PC-3 (cell line): ENCODE measurements at regions of chr9 and their contacts with region 1.

Region 1: DNA sequence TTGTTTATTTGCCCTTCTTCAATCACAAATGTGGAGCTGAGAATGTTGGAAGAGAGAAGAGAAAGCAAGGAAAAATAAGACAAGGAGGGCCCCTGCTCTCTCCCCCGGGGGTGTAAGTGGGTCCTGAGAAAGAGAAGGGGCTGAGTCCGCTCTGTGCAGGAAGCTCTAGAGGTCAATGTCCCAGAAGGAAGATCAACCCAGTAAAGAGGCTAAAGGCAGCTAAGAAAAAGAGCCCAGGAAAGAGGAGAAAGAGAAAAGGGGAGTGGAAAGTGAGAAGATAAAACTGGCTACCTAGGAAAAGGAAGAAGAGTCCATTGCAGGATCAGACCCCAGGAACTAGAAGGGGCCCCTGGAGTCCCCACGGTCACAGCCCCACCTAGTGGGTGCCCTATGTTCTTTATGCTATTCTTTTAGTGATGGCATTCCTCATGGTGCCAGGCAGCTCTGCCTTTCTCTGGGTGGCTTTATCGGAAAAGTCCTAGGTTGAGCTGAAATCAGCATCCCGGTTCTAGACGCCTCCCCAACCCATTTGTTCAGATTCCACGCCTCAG is 583.4 kb downstream of the ACTL7B start:
- DNase-seq: peak; percentile 54
- ATAC-seq: peak; percentile 80
- H3K4me3 ChIP-seq: peak overlapping the region; percentile 65
- H3K27ac ChIP-seq: peak overlapping the region; percentile 81
- H3K4me1 ChIP-seq: peaks cover 35% of the 10 kb centered on the region
- H3K27me3 ChIP-seq: no peaks in the 10 kb centered on the region
- CTCF ChIP-seq: peak; percentile 65

Region 2: DNA sequence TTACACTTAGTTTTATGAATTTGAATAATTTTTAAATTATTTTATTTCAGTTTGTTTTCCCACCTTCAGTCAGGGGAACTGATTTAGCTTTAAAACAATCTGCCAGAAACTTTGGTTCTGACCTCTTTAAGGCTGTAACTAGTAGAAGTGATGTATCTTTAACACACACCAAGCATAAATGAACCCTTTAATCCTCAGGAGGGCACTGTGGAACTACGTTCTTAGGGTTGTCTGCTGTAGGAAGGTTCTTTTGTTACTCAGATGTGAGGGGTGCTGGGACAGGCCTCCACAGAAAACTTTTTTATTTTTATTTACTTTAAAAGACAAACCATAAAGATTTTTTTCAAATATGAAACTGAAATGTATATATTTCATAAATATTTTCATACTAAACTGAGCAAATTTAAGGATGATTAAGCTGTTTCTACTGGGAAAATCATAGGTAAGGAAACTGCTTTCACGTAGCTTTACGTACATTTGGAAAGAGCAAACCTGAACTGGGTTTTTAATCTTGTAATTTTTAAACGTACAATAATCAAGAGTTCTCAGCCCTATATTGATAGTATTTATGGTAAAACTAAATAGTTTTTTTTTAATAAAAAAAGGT is 788.2 kb before region 1 on chr9:
- CTCF ChIA-PET with region 1: no interaction called
- POLR2A ChIA-PET with region 1: no interaction called
- intact Hi-C with region 1: loop called (anchors 1 kb)
- DNase-seq: peak; percentile 74
- ATAC-seq: peak; percentile 40
- H3K4me3 ChIP-seq: no peak overlapping the region
- H3K27ac ChIP-seq: no peak overlapping the region
- H3K4me1 ChIP-seq: peaks cover 27% of the 10 kb centered on the region
- H3K27me3 ChIP-seq: no peaks in the 10 kb centered on the region
- CTCF ChIP-seq: peak; percentile 66

Region 3: GRCh38 chr9:107794259-107794658 is 478.2 kb before region 1 on chr9:
- CTCF ChIA-PET with region 1: no interaction called
- POLR2A ChIA-PET with region 1: no interaction called
- intact Hi-C with region 1: loop called (anchors 2 kb)
- DNase-seq: peak; percentile 22
- ATAC-seq: peak; percentile 96
- H3K4me3 ChIP-seq: no peak overlapping the region
- H3K27ac ChIP-seq: no peak overlapping the region
- H3K4me1 ChIP-seq: peaks cover 6% of the 10 kb centered on the region
- H3K27me3 ChIP-seq: no peaks in the 10 kb centered on the region
- CTCF ChIP-seq: no peak

Region 4: GRCh38 chr9:108057421-108058134 is 214.8 kb before region 1 on chr9:
- CTCF ChIA-PET with region 1: no interaction called
- POLR2A ChIA-PET with region 1: no interaction called
- intact Hi-C with region 1: loop called (anchors 1 kb)
- DNase-seq: peak; percentile 88
- ATAC-seq: peak; percentile 90
- H3K4me3 ChIP-seq: no peak overlapping the region
- H3K27ac ChIP-seq: peak overlapping the region; percentile 98
- H3K4me1 ChIP-seq: peaks cover 28% of the 10 kb centered on the region
- H3K27me3 ChIP-seq: no peaks in the 10 kb centered on the region
- CTCF ChIP-seq: no peak

Region 5: GRCh38 chr9:108156270-108156998 is 116.0 kb before region 1 on chr9:
- CTCF ChIA-PET with region 1: no interaction called
- POLR2A ChIA-PET with region 1: no interaction called
- intact Hi-C with region 1: loop called (anchors 5 kb)
- DNase-seq: peak; percentile 76
- ATAC-seq: peak; percentile 93
- H3K4me3 ChIP-seq: peak overlapping the region; percentile 47
- H3K27ac ChIP-seq: peak overlapping the region; percentile 62
- H3K4me1 ChIP-seq: peaks cover 15% of the 10 kb centered on the region
- H3K27me3 ChIP-seq: no peaks in the 10 kb centered on the region
- CTCF ChIP-seq: no peak

Region 6: DNA sequence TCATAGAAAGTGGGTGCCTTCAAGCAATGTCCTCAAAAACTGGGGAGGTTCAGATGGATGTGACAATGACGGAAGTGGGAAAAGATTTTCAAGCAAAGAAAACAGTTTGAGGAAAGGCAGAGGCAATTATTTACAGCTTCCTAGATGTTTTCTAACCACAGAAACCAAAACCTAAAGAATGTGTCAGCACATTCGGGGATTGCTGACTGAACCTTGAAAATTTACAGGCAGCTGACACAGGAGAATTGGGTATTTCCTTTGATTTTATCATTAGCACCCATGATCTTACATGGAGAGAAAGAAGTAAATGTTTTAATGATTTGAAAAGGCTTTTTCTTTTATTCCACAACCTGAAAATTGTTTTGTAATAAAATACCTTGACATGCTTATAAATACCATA is 214.4 kb after region 1 on chr9:
- CTCF ChIA-PET with region 1: no interaction called
- POLR2A ChIA-PET with region 1: no interaction called
- intact Hi-C with region 1: no loop called
- DNase-seq: no peak
- ATAC-seq: no peak
- H3K4me3 ChIP-seq: no peak overlapping the region
- H3K27ac ChIP-seq: no peak overlapping the region
- H3K4me1 ChIP-seq: no peaks in the 10 kb centered on the region
- H3K27me3 ChIP-seq: no peaks in the 10 kb centered on the region
- CTCF ChIP-seq: no peak